ENCODE measurements at regions of chr12 and their contacts with region 1.

Region 1: GRCh38 chr12:120432772-120433525 is 5.0 kb upstream of the COX6A1 start:
- DNase-seq: no peak
- ATAC-seq: no peak
- H3K4me3 ChIP-seq: no peak overlapping the region
- H3K27ac ChIP-seq: no peak overlapping the region
- H3K4me1 ChIP-seq: peaks cover 0 to 6% (median 0%) of the 10 kb centered on the region in 9 donors
- H3K27me3 ChIP-seq: peaks cover 0 to 5% (median 0%) of the 10 kb centered on the region in 7 donors
- CTCF ChIP-seq: no peak

Region 2: DNA sequence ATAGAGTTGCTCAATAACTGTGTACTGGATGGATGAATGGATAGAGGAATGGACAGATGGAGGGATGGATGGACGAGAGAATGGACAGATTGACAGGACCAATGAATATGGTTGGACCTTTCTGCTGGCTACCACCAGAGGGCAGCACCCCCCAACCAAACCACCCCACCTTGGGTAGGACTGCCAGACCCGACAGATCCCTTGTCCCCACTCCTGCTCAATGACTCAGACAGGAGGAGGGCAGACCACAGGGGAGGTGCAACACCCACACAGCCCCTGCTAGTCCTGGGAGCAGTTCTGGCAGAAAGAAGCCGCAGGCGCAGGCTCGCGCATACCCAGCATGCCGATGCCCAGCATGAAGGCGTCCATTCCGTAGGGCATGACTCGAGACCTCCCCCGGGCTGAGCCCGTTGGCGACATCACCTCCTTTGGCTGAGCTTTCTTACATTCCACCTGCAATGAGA is 76.3 kb before region 1 on chr12:
- intact Hi-C with region 1: loop called (anchors 1 to 5 kb)
- DNase-seq: peak; percentile 75 to 76
- ATAC-seq: peak; percentile 80 to 96 (median 90)
- H3K4me3 ChIP-seq: no peak overlapping the region
- H3K27ac ChIP-seq: no peak overlapping the region
- H3K4me1 ChIP-seq: peaks cover 0 to 7% (median 0%) of the 10 kb centered on the region in 9 donors
- H3K27me3 ChIP-seq: peaks cover 0 to 16% (median 0%) of the 10 kb centered on the region in 7 donors
- CTCF ChIP-seq: peak; percentile 74 to 90 (median 85)

Region 3: GRCh38 chr12:120421701-120422100 is 11.2 kb before region 1 on chr12:
- intact Hi-C with region 1: no loop called
- DNase-seq: no peak
- ATAC-seq: no peak
- H3K4me3 ChIP-seq: no peak overlapping the region
- H3K27ac ChIP-seq: no peak overlapping the region
- H3K4me1 ChIP-seq: peaks cover 0 to 5% (median 0%) of the 10 kb centered on the region in 9 donors
- H3K27me3 ChIP-seq: no peaks in the 10 kb centered on the region
- CTCF ChIP-seq: no peak